ENCODE measurements at regions of chr16 and their contacts with region 1.

Region 1: DNA sequence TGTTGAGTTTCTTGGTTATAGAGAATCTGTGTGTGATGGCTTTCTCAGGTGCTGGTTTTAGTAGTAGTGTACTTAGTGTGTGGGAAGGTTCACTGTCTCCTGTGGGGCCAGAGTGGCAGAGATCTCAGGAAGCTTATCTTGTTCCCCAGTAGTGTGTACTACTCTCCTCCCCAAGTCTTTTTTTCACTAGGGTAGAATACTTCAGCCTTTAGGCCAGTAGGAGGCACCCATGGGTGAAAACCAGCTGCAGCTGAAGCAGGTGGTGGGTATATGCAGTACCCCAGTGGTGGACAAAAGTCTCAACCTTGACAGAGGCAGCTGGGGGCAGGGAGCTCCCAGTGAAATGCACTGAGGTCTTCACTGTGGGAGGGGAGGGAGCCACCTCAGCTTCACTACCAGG is 109.9 kb downstream of the PHKB start:
- DNase-seq: no peak
- H3K4me3 ChIP-seq: no peak overlapping the region
- H3K27ac ChIP-seq: no peak overlapping the region
- H3K4me1 ChIP-seq: no peaks in the 10 kb centered on the region
- H3K27me3 ChIP-seq: no peaks in the 10 kb centered on the region
- CTCF ChIP-seq: peak in 2 of 3 experiments; percentile 23 to 30; a peak in 2 of 4 replicates
- EP300 ChIP-seq: no peak
- POLR2A ChIP-seq: no peak
- RAD21 ChIP-seq: peak; percentile 23 to 47; a peak in 3 of 4 replicates

Region 2: GRCh38 chr16:47581112-47581511 is 10.1 kb after region 1 on chr16:
- CTCF ChIA-PET with region 1: interaction called, 14 read pairs
- POLR2A ChIA-PET with region 1: no interaction called
- DNase-seq: no peak
- H3K4me3 ChIP-seq: no peak overlapping the region
- H3K27ac ChIP-seq: no peak overlapping the region
- H3K4me1 ChIP-seq: peaks cover 0 to 4% (median 2%) of the 10 kb centered on the region in 4 experiments; a peak in 1 of 7 replicates
- H3K27me3 ChIP-seq: no peaks in the 10 kb centered on the region
- CTCF ChIP-seq: peak in 1 of 3 experiments; percentile 33; a peak in 1 of 4 replicates
- EP300 ChIP-seq: no peak
- POLR2A ChIP-seq: no peak
- RAD21 ChIP-seq: peak in 1 of 2 experiments; percentile 27; a peak in 2 of 4 replicates